PC-3 (cell line): ENCODE measurements at regions of chr10 and their contacts with region 1.

Region 1: DNA sequence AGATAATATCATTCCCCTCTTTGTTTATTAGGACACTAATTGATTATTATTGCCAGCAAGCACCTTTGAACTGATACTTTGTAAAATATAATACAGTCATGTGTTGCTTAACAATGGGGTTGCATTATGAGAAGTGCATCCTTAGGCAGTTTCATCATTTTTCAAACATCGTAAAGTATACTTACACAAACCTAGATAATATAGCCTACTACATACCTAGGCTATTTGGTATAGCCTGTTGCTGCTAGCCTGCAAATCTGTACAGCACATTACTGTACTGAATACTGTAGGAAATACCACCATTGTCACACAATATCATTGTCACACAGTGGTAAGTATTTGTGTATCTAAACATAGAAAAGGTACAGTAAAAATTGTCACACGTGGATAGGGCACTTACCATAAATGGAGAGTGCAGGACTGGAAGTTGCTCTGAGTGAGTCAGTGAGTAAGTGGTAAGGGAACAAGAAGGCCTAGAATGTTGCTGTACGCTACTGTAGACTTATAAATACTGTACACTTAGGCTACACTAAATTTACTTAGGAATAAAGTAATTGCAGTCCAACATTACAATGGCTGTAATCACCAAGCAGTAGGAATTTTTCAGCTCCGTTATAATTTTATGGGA is 70.7 kb downstream of the LCOR start:
- DNase-seq: peak; percentile 45
- ATAC-seq: peak; percentile 94
- H3K4me3 ChIP-seq: peak overlapping the region; percentile 53
- H3K27ac ChIP-seq: peak overlapping the region; percentile 39
- H3K4me1 ChIP-seq: peaks cover 33% of the 10 kb centered on the region
- H3K27me3 ChIP-seq: no peaks in the 10 kb centered on the region
- CTCF ChIP-seq: no peak

Region 2: DNA sequence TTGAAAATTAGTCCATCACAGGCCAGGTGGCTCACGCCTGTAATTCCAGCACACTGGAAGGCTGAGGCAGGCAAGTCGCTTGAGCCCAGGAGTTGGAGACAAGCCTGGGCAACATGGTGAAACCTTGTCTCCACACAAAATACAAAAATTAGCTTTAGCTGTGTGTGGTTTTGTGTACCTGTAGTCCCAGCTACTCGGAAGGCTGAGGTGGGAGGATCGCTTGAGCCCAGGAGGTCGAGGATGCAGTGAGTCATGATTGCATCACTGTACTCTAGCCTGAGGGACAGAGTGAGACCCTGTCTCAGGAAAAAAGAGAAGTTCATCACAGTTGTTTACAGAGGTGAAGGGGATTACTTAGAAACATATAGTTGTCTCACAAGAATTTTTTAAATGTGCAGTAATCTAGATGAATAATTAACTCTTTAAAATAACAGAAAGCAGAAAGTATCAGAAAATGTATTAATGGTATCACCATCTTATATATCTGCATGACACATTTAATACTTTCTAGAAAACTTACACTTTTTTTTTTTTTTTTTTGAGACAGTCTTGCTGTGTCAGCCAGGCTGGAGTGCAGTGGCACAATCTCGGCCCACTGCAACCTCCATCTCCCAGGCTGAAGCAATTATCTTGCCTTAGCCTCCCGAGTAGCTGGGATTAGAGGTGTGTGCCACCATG is 61.9 kb before region 1 on chr10:
- CTCF ChIA-PET with region 1: no interaction called
- POLR2A ChIA-PET with region 1: no interaction called
- intact Hi-C with region 1: loop called (anchors 5 kb)
- DNase-seq: peak; percentile 82
- ATAC-seq: peak; percentile 84
- H3K4me3 ChIP-seq: peak overlapping the region; percentile 42; the same call in 1 of the 2 replicates
- H3K27ac ChIP-seq: peak overlapping the region; percentile 51
- H3K4me1 ChIP-seq: peaks cover 39% of the 10 kb centered on the region
- H3K27me3 ChIP-seq: no peaks in the 10 kb centered on the region
- CTCF ChIP-seq: no peak

Region 3: DNA sequence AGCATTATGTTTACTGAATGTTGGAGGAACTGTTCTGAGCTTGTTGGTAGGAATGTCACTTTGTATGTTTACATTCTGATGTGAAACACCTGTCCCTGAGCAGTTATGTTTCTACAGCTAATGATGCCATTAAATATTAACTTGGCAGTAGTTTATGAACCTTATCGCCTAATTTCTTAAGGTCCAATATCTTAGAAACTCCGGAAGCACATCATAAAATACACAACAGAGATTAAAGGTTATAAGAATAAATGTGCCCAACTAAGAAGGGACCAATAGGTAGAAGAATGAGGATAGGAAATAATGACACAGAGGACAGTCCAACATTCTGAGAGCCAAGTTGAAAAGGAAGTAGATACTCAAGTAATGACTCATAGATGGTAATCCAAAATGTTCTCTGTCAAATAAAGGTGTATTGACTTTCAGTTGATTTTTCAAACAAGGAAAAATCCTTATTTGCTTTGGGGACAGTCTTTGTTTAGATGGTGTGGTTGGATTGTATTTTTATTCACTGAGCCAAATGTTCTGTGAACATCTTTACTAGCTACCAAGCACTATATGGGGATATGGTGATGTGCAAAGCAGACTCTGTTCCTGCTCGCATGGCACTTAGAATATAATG is 38.8 kb before region 1 on chr10:
- CTCF ChIA-PET with region 1: no interaction called
- POLR2A ChIA-PET with region 1: no interaction called
- intact Hi-C with region 1: loop called (anchors 5 kb)
- DNase-seq: peak; percentile 84
- ATAC-seq: peak; percentile 93
- H3K4me3 ChIP-seq: peak overlapping the region; percentile 9; the same call in 1 of the 2 replicates
- H3K27ac ChIP-seq: peak overlapping the region; percentile 56
- H3K4me1 ChIP-seq: peaks cover 20% of the 10 kb centered on the region
- H3K27me3 ChIP-seq: no peaks in the 10 kb centered on the region
- CTCF ChIP-seq: no peak